CD4-positive, alpha-beta T cell (primary cell): ENCODE measurements at regions of chr2 and their contacts with region 1.

Region 1: GRCh38 chr2:9378433-9379390 is 44.6 kb downstream of the ITGB1BP1 start:
- DNase-seq: no peak
- ATAC-seq: no peak
- H3K4me3 ChIP-seq: no peak overlapping the region
- H3K4me3 Mint-ChIP-seq: no peak overlapping the region
- H3K27ac ChIP-seq: no peak overlapping the region
- H3K27ac Mint-ChIP-seq: no peak overlapping the region
- H3K4me1 ChIP-seq: no peaks in the 10 kb centered on the region
- H3K4me1 Mint-ChIP-seq: no peaks in the 10 kb centered on the region
- H3K27me3 ChIP-seq: peaks cover 0 to 3% of the 10 kb centered on the region in 2 experiments
- H3K27me3 Mint-ChIP-seq: no peaks in the 10 kb centered on the region
- CTCF ChIP-seq: no peak

Region 2: DNA sequence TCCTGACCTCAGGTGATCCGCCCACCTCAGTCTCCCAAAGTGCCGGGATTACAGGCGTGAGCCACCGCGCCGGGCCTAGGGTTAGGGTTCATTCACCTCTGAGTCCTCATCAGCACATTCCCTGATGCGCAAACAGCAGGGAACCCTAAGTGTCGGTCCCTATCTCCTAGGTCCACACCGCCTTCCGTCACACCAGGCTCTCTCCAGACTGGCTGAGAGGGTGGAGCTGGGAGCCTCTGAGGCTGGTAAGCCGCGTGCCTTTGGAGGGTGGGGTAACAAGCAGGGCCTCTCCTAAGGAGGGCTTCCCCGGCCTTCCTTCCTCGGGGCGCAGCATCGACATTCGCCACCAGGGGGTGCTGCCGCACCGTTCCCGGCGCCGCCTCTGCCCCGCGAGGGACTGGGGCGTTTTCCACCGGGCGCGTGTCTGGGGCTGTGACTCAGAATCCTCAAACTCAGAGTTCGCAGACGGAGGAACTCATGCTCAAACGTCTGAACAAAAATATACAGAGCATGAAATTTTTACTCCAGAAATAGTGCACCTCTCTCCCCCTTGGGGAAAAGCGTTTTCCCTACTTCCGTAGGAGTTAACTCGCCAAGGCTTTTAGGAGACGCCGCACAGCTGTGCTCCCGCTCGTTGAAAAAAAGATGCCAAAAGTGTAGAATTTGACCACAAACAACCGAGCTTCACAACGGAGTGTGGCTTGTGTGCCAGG is 236.0 kb before region 1 on chr2:
- CTCF ChIA-PET with region 1: no interaction called
- POLR2A ChIA-PET with region 1: no interaction called
- intact Hi-C with region 1: loop called in 1 of 2 experiments (anchors 10 kb)
- DNase-seq: peak; percentile 50 to 83 (median 70)
- ATAC-seq: peak; percentile 95
- H3K4me3 ChIP-seq: peak overlapping the region; percentile 20
- H3K4me3 Mint-ChIP-seq: no peak overlapping the region
- H3K27ac ChIP-seq: no peak overlapping the region
- H3K27ac Mint-ChIP-seq: no peak overlapping the region
- H3K4me1 ChIP-seq: peaks cover 7% of the 10 kb centered on the region
- H3K4me1 Mint-ChIP-seq: peaks cover 5% of the 10 kb centered on the region
- H3K27me3 ChIP-seq: peaks cover 0 to 6% of the 10 kb centered on the region in 2 experiments
- H3K27me3 Mint-ChIP-seq: peaks cover 39% of the 10 kb centered on the region
- CTCF ChIP-seq: peak; percentile 87